Activated CD4-positive, alpha-beta T cell treated with anti-CD3 and anti-CD28 coated beads, Interleukin-2, amount 10 ng/mL, durations not matched to agents 24 days and 14 days (primary cell): ENCODE measurements at regions of chr3 and their contacts with region 1.

Region 1: GRCh38 chr3:9452417-9452816 is 55.0 kb downstream of the SETD5 start:
- DNase-seq: no peak
- H3K4me3 Mint-ChIP-seq: peak overlapping the region; percentile 48
- H3K27ac Mint-ChIP-seq: peak overlapping the region; percentile 78
- H3K4me1 Mint-ChIP-seq: peaks cover 27% of the 10 kb centered on the region
- H3K27me3 Mint-ChIP-seq: no peaks in the 10 kb centered on the region

Region 2: DNA sequence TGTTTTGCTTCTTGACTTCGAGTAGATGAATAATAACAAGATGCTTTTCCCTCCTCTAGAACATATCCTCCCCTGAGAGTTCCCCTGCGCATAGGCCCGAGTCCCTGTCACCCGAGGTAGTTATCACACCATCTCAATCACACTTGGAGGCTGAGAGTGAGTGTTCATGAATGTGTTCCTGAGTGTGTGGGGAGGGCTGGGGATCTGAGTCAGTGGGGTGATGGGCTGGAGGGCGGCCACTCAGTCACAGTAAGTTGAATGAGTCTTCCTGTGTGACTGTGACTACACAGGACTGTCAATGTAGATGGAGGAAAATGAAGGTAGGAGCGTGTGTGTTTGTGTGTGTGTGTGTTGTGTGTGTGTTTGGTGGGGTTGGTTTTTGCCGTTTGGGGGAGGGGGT is 16.0 kb after region 1 on chr3:
- intact Hi-C with region 1: loop called (anchors 2 kb)
- DNase-seq: no peak
- H3K4me3 Mint-ChIP-seq: no peak overlapping the region
- H3K27ac Mint-ChIP-seq: peak overlapping the region; percentile 80
- H3K4me1 Mint-ChIP-seq: peaks cover 25% of the 10 kb centered on the region
- H3K27me3 Mint-ChIP-seq: no peaks in the 10 kb centered on the region